H1 (cell line): ENCODE measurements at regions of chr17 and their contacts with region 1.

Region 1: DNA sequence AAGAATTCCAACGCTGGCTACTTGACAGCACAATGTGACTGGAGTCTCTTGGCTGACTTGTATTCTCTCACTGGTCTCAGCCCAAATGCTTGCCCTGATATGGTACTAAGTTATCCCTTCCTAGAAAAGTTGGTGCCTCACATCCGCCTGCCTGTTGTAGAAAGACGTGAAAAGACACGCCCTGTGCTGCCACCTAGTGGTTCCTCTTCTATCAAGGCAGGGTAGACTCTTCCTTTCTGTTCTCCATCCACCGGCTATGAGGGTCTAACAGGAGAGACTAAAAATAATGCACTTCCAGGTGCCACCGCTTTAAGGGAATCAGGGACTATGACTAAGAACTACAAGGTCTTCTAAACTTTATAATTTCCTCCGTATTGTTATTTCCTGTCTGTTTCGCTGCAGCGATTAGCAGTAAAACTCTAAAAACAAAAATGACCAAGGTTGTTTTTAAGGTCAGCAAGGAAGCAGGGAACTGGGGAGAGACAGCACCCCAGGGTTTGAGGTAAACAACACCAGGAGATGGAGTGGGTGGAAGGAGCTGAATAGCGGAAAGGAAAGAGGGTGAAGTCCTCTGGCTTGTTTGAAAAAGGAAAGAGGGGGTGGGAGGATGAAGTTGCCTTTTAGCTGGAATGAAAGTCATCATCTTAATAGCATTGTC is 109.5 kb downstream of the YPEL2 start:
- DNase-seq: peak; percentile 69 to 90
- H3K4me3 ChIP-seq: no peak overlapping the region
- H3K27ac ChIP-seq: no peak overlapping the region
- H3K4me1 ChIP-seq: peaks cover 0 to 5% (median 0%) of the 10 kb centered on the region in 4 experiments; a peak in 2 of 7 replicates
- H3K27me3 ChIP-seq: no peaks in the 10 kb centered on the region
- CTCF ChIP-seq: peak; percentile 47 to 94 (median 90)
- EP300 ChIP-seq: no peak
- POLR2A ChIP-seq: no peak
- RAD21 ChIP-seq: peak; percentile 89 to 96

Region 2: DNA sequence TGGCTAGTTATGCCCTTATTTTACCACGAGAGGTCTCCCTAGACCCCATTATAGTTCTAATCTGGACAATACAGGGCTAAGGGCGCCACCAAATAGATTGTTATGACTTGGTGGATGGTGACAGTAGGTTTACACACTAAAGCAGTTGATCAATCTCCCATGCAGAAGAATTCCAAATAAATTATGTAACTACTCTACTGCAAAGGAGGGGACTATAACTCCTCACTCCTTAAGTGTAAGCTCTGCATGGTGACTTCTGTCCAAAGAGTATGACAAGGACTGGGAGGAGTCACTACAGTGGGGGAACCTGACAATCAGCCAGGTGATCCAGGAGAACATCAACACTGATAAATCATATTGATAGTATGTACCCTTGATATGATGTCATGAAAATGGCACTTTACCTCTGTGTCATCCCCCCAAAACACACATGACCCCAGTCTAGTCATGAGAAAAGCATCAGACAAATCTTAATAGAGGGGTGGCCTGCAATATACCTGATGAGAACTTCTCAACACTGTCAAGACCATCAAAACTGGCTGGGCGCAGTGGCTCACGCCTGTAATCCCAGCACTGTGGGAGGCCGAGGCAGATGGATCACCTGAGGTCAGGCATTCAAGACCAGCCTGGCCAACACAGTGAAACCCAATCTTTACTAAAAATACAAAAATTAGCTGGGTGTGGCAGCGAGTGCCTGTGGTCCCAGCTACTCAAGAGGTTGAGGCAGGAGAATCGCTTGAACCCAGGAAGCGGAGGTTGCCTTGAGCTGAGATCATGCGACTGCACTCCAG is 129.6 kb before region 1 on chr17:
- CTCF ChIA-PET with region 1: interaction called, 299 read pairs
- POLR2A ChIA-PET with region 1: no interaction called
- DNase-seq: no peak
- H3K4me3 ChIP-seq: no peak overlapping the region
- H3K27ac ChIP-seq: no peak overlapping the region
- H3K4me1 ChIP-seq: no peaks in the 10 kb centered on the region
- H3K27me3 ChIP-seq: no peaks in the 10 kb centered on the region
- CTCF ChIP-seq: peak in 2 of 3 experiments; percentile 77 to 86; a peak in 3 of 4 replicates
- EP300 ChIP-seq: no peak
- POLR2A ChIP-seq: no peak
- RAD21 ChIP-seq: peak; percentile 93 to 95

Region 3: GRCh38 chr17:59423137-59423703 is 17.7 kb before region 1 on chr17:
- CTCF ChIA-PET with region 1: interaction called, 11 read pairs
- POLR2A ChIA-PET with region 1: interaction called, 6 read pairs
- DNase-seq: no peak
- H3K4me3 ChIP-seq: no peak overlapping the region
- H3K27ac ChIP-seq: no peak overlapping the region
- H3K4me1 ChIP-seq: peaks cover 2 to 12% (median 6%) of the 10 kb centered on the region in 4 experiments; a peak in 5 of 7 replicates
- H3K27me3 ChIP-seq: no peaks in the 10 kb centered on the region
- CTCF ChIP-seq: no peak
- EP300 ChIP-seq: no peak
- POLR2A ChIP-seq: no peak
- RAD21 ChIP-seq: no peak

Region 4: GRCh38 chr17:59451706-59452105 is 10.8 kb after region 1 on chr17:
- CTCF ChIA-PET with region 1: interaction called, 15 read pairs
- POLR2A ChIA-PET with region 1: no interaction called
- DNase-seq: no peak
- H3K4me3 ChIP-seq: no peak overlapping the region
- H3K27ac ChIP-seq: no peak overlapping the region
- H3K4me1 ChIP-seq: no peaks in the 10 kb centered on the region
- H3K27me3 ChIP-seq: no peaks in the 10 kb centered on the region
- CTCF ChIP-seq: peak in 2 of 3 experiments; percentile 5 to 24; a peak in 2 of 4 replicates
- EP300 ChIP-seq: no peak
- POLR2A ChIP-seq: no peak
- RAD21 ChIP-seq: no peak; a peak in 1 of 4 replicates

Region 5: DNA sequence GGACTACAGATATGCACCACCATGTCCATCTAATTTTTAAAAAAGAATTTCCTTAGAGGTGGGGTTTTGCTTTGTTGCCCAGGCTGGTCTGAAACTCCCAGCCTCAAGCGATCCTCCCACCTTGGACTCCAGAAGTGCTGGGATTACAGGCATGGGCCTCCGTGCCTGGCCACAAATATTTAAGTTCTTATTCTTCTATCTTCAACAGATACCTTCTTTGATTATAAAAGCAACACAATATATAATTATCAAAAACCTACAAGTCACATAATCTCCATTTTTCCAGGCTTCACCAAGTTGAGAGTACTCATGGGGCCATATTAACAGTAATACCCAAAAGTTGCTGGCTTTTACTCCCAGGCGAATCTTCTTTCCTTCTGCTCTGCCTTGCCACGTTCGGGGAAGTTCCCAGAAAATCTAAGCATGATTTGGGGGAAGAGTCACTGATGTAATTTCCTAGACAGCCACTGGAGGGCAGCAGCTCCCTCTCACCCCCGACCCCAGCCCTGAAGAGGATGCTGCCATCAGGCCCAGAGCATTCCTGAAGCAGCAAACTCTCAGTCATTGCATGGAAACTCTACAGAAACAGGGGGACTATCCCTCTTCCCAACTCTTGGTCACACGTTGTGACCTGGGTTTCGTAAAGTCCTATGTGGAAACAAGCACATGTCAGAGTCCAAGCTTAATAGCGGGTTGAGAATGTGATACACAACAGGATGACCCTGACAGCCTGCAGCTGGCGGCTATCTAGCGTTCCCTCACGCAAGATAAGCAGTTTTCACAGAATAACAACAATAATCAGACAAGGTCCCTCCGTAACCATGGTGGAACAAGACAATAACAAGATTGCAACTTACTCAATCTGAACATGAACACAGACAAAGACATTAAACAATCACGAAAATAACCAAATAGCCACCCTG is 80.6 kb after region 1 on chr17:
- CTCF ChIA-PET with region 1: interaction called, 13 read pairs
- POLR2A ChIA-PET with region 1: no interaction called
- DNase-seq: peak; percentile 38 to 89
- H3K4me3 ChIP-seq: no peak overlapping the region
- H3K27ac ChIP-seq: no peak overlapping the region
- H3K4me1 ChIP-seq: no peaks in the 10 kb centered on the region
- H3K27me3 ChIP-seq: no peaks in the 10 kb centered on the region; a peak in 1 of 7 replicates
- CTCF ChIP-seq: peak; percentile 79 to 91 (median 89)
- EP300 ChIP-seq: no peak
- POLR2A ChIP-seq: no peak
- RAD21 ChIP-seq: peak; percentile 87 to 91